Panc1 (cell line): ENCODE measurements at regions of chr1 and their contacts with region 1.

Region 1: DNA sequence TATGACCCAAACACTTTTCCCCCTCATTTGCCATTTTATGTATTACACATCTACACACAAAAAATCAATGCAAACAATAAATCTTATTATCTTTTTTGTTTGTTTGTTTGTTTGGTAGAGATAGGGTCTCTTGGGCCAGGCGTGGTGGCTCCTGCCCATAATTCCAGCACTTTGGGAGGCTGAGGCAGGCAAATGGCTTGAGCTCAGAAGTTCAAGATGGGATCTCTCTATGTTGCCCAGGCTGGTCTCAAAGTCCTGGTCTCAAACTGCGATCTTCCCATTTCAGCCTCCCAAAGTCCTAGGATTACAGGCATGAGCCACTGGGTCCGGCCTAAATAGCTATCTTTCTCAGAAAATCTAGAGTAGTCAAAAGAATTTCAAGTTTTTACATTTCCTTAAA is 1.2 kb upstream of the DBT start:
- DNase-seq: no peak
- ATAC-seq: no peak
- H3K4me3 ChIP-seq: no peak overlapping the region
- H3K27ac ChIP-seq: no peak overlapping the region
- H3K4me1 ChIP-seq: peaks cover 4% of the 10 kb centered on the region; the same call in 1 of the 2 replicates
- H3K27me3 ChIP-seq: no peaks in the 10 kb centered on the region
- CTCF ChIP-seq: no peak

Region 2: GRCh38 chr1:99935534-99935933 is 315.3 kb before region 1 on chr1:
- CTCF ChIA-PET with region 1: no interaction called
- POLR2A ChIA-PET with region 1: no interaction called
- in situ Hi-C with region 1: no loop called
- intact Hi-C with region 1: no loop called
- DNase-seq: no peak
- ATAC-seq: no peak
- H3K4me3 ChIP-seq: no peak overlapping the region
- H3K27ac ChIP-seq: no peak overlapping the region
- H3K4me1 ChIP-seq: no peaks in the 10 kb centered on the region
- H3K27me3 ChIP-seq: no peaks in the 10 kb centered on the region
- CTCF ChIP-seq: no peak

Region 3: DNA sequence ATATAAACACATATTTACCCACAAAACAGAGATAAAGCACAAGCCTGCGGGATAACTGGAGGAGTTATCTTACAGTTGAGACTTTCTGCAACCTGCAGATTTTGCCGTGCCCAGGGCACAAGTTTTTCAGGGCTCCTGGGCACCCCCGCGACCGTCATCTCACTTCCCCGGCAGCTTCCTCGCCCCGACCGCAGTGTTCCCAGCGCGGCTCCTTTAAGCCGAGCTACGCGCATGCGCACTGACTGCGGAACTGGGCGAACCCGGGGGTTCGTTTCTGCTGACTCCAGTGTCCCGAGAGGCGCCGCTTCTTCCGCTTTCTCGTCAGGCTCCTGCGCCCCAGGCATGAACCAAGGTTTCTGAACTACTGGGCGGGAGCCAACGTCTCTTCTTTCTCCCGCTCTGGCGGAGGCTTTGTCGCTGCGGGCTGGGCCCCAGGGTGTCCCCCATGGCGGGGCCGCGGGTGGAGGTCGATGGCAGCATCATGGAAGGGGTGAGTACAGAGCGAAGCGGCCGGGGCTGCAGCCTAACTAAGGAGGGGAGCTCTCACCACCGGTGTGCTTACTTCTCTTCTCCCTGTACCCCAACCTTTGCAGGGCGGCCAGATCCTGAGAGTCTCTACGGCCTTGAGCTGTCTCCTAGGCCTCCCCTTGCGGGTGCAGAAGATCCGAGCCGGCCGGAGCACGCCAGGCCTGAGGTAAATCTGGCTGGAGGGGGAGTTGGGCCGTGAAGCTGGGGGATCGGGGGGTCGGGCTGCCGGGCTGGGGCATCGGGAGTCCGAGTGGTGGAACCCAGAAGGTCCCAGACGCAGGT is 15.3 kb after region 1 on chr1 and contains the start of gene RTCA:
- CTCF ChIA-PET with region 1: no interaction called
- POLR2A ChIA-PET with region 1: interaction called, 20 read pairs
- in situ Hi-C with region 1: no loop called
- intact Hi-C with region 1: no loop called
- DNase-seq: peak; percentile 55
- ATAC-seq: peak; percentile 99
- H3K4me3 ChIP-seq: peak within 1 kb of the TSS; percentile 67 to 88
- H3K27ac ChIP-seq: peak within 1 kb of the TSS; percentile 89
- H3K4me1 ChIP-seq: peaks cover 5% of the 10 kb centered on the region
- H3K27me3 ChIP-seq: no peaks in the 10 kb centered on the region
- CTCF ChIP-seq: no peak
- total RNA-seq, gene RTCA: 33.1 TPM